Cardiac septum (tissue), 1 donor: ENCODE measurements at regions of chr5 and their contacts with region 1.

Region 1: GRCh38 chr5:137344723-137345322 is 154.3 kb downstream of the SPOCK1 start:
- DNase-seq: peak; percentile 3

Region 2: GRCh38 chr5:137254119-137255090 is 90.4 kb before region 1 on chr5:
- intact Hi-C with region 1: no loop called
- DNase-seq: no peak

Region 3: GRCh38 chr5:137498736-137499505 is 154.1 kb after region 1 on chr5 and contains the start of gene SPOCK1:
- intact Hi-C with region 1: loop called (anchors 5 kb)
- DNase-seq: no peak
- total RNA-seq, gene SPOCK1: 43.4 TPM